ENCODE measurements at regions of chr6 and their contacts with region 1.

Region 1: GRCh38 chr6:7615611-7616383 is 25.8 kb downstream of the SNRNP48 start:
- DNase-seq: peak; percentile 72
- ATAC-seq: peak; percentile 64
- H3K4me3 ChIP-seq: peak overlapping the region in 1 of 3 experiments; percentile 10; a peak in 1 of 6 replicates
- H3K27ac ChIP-seq: no peak overlapping the region
- H3K4me1 ChIP-seq: peaks cover 21% of the 10 kb centered on the region
- H3K27me3 ChIP-seq: peaks cover 0 to 22% of the 10 kb centered on the region in 2 experiments; a peak in 3 of 5 replicates
- CTCF ChIP-seq: peak; percentile 88
- EP300 ChIP-seq: no peak
- POLR2A ChIP-seq: no peak
- RAD21 ChIP-seq: peak; percentile 83

Region 2: GRCh38 chr6:6724539-6725467 is 891.0 kb before region 1 on chr6:
- CTCF ChIA-PET with region 1: no interaction called
- POLR2A ChIA-PET with region 1: no interaction called
- in situ Hi-C with region 1: no loop called
- intact Hi-C with region 1: loop called (anchors 1 kb)
- DNase-seq: peak; percentile 51
- ATAC-seq: peak; percentile 90
- H3K4me3 ChIP-seq: peak overlapping the region; percentile 26 to 75 (median 31)
- H3K27ac ChIP-seq: no peak overlapping the region
- H3K4me1 ChIP-seq: peaks cover 31% of the 10 kb centered on the region
- H3K27me3 ChIP-seq: peaks cover 0 to 4% of the 10 kb centered on the region in 2 experiments; a peak in 2 of 5 replicates
- CTCF ChIP-seq: peak; percentile 90
- EP300 ChIP-seq: no peak
- POLR2A ChIP-seq: no peak
- RAD21 ChIP-seq: peak; percentile 74

Region 3: DNA sequence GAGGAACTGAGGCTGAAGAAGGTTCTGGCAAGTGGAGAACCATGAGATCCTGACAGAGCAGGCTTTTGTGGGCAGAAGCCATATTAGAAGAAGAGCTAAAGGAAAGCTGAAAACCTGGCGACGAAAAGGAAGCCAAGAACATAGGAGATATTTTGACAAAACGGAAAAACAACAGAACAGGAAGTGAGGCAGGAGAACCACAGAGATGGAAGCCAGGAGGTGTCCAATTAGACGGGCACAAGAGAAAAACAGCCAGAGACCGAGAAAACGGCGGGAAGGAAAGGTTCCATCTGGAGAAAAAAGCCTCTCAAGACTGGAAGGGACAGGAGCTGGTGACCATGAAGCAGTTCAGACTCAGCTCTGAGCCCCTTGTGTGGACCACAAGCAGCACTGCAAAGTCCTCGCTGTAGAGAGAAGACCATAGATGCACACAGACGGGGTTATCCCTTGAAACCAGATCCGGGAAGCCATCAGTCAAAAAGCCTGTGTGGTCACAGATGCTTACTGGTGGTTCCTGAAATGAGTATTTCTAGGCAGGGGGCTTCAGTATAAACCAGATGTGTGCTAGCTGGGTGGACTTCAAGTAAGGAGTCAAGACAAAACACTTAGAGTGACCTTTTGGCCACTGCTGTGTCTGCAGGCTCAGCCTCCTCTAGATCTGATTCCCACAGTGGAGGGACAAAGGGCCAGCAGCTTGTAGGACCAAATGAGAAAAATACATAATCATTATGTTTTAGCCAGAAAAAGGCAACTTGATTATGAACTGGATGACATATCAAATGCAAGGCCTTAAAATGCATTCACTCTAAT is 333.5 kb before region 1 on chr6:
- CTCF ChIA-PET with region 1: no interaction called
- POLR2A ChIA-PET with region 1: no interaction called
- in situ Hi-C with region 1: loop called (anchors 10 kb)
- intact Hi-C with region 1: no loop called
- DNase-seq: no peak
- ATAC-seq: peak; percentile 11
- H3K4me3 ChIP-seq: no peak overlapping the region
- H3K27ac ChIP-seq: no peak overlapping the region
- H3K4me1 ChIP-seq: no peaks in the 10 kb centered on the region
- H3K27me3 ChIP-seq: no peaks in the 10 kb centered on the region
- CTCF ChIP-seq: no peak
- EP300 ChIP-seq: no peak
- POLR2A ChIP-seq: no peak
- RAD21 ChIP-seq: no peak

Region 4: DNA sequence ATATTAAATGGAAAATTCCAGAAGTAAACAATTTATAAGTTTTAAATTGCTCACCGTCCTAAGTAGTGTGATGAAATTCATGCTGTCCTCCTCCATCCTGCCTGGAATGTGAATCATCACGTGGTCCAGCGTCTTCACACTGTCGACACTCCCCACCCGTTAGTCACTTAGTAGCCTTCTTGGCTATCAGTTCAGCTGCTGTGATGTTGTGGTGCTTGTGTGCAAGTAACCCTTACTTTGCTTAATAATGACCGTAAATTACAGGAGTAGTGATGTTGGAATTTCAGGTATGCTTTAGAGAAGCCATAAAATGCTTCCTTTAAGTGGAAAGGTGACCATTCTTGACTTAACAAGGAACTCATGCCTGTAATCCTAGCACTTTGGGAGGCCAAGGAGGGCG is 201.0 kb before region 1 on chr6:
- CTCF ChIA-PET with region 1: no interaction called
- POLR2A ChIA-PET with region 1: no interaction called
- in situ Hi-C with region 1: loop called (anchors 5 kb)
- intact Hi-C with region 1: no loop called
- DNase-seq: no peak
- ATAC-seq: no peak
- H3K4me3 ChIP-seq: no peak overlapping the region
- H3K27ac ChIP-seq: no peak overlapping the region
- H3K4me1 ChIP-seq: peaks cover 16% of the 10 kb centered on the region
- H3K27me3 ChIP-seq: no peaks in the 10 kb centered on the region
- CTCF ChIP-seq: no peak
- EP300 ChIP-seq: no peak
- POLR2A ChIP-seq: no peak
- RAD21 ChIP-seq: no peak

Region 5: DNA sequence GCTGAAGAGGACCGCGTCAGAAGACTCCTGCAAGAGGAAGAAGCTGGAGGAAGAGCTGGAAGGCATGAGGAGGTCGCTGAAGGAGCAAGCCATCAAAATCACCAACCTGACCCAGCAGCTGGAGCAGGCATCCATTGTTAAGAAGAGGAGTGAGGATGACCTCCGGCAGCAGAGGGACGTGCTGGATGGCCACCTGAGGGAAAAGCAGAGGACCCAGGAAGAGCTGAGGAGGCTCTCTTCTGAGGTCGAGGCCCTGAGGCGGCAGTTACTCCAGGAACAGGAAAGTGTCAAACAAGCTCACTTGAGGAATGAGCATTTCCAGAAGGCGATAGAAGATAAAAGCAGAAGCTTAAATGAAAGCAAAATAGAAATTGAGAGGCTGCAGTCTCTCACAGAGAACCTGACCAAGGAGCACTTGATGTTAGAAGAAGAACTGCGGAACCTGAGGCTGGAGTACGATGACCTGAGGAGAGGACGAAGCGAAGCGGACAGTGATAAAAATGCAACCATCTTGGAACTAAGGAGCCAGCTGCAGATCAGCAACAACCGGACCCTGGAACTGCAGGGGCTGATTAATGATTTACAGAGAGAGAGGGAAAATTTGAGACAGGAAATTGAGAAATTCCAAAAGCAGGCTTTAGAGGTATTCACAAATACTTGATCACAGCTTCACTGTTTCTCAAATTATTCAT is 34.7 kb before region 1 on chr6:
- CTCF ChIA-PET with region 1: no interaction called
- POLR2A ChIA-PET with region 1: no interaction called
- in situ Hi-C with region 1: no loop called
- intact Hi-C with region 1: no loop called
- DNase-seq: peak; percentile 80
- ATAC-seq: peak; percentile 73
- H3K4me3 ChIP-seq: peak overlapping the region in 1 of 3 experiments; percentile 35; a peak in 2 of 6 replicates
- H3K27ac ChIP-seq: peak overlapping the region; percentile 63
- H3K4me1 ChIP-seq: peaks cover 34% of the 10 kb centered on the region
- H3K27me3 ChIP-seq: no peaks in the 10 kb centered on the region
- CTCF ChIP-seq: no peak
- EP300 ChIP-seq: peak in 1 of 2 experiments; percentile 43; a peak in 1 of 4 replicates
- POLR2A ChIP-seq: peak in 1 of 2 experiments; percentile 41; a peak in 1 of 4 replicates
- RAD21 ChIP-seq: no peak

Region 6: DNA sequence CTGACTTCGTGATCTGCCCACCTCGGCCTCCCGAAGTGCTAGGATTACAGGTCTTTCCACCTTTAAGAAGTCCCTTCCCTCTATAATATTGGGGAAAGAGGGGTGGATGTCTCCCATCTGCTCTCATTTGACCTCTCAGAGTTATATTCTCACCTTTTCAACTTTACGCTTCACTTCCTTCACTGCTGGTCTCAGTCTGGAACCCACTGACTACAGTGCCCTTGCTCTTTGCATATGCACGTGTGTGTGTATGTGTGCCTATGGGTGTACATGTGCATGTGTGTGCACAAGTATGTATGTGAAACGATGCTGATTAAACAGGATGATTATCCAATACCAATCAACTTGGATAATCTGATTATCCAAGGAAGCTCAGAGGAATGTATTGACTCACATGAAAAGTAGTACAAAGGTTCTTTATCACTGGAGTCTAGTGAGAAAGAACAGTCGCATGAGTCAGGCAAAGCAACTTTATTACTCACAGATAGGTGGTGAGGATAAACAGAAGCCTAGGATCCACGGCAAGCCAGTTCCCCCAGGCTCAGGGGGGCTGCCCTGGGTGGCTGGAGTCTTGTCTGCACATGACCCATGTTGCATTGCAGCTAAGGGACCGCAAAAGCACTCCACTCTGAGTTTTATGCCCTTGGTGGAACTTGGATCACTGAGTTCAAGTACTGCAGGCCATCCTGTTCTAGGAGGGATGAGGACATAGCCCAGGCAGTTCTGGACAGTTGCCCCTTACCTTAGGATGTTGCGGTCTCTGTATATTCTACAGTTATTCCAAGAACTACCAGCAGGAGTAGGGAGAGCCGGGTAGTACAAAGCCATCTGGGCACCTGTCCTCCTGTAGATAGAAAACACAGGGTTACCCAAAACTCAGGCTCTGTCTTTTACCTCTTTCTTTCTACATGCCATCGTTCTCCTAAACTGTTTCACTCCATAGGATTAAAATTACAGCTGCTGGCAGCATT is 25.1 kb after region 1 on chr6:
- CTCF ChIA-PET with region 1: no interaction called
- POLR2A ChIA-PET with region 1: no interaction called
- in situ Hi-C with region 1: no loop called
- intact Hi-C with region 1: no loop called
- DNase-seq: peak; percentile 64
- ATAC-seq: peak; percentile 79
- H3K4me3 ChIP-seq: no peak overlapping the region
- H3K27ac ChIP-seq: no peak overlapping the region
- H3K4me1 ChIP-seq: peaks cover 14% of the 10 kb centered on the region; the same call in 1 of the 2 replicates
- H3K27me3 ChIP-seq: peaks cover 0 to 6% of the 10 kb centered on the region in 2 experiments; a peak in 1 of 5 replicates
- CTCF ChIP-seq: no peak
- EP300 ChIP-seq: no peak
- POLR2A ChIP-seq: no peak
- RAD21 ChIP-seq: no peak

Region 7: GRCh38 chr6:8063761-8064637 is 448.2 kb after region 1 on chr6 and contains the start of gene BLOC1S5:
- CTCF ChIA-PET with region 1: no interaction called
- POLR2A ChIA-PET with region 1: no interaction called
- in situ Hi-C with region 1: no loop called
- intact Hi-C with region 1: no loop called
- DNase-seq: peak; percentile 99
- ATAC-seq: peak; percentile 95
- H3K4me3 ChIP-seq: peak within 1 kb of the TSS; percentile 74 to 93 (median 92)
- H3K27ac ChIP-seq: peak within 1 kb of the TSS; percentile 85
- H3K4me1 ChIP-seq: peaks cover 39% of the 10 kb centered on the region
- H3K27me3 ChIP-seq: no peaks in the 10 kb centered on the region; a peak in 1 of 5 replicates
- CTCF ChIP-seq: peak; percentile 60
- EP300 ChIP-seq: peak; percentile 23 to 56; a peak in 2 of 4 replicates
- POLR2A ChIP-seq: peak; percentile 87 to 95
- RAD21 ChIP-seq: peak; percentile 56; the same call in 1 of the 2 replicates
- total RNA-seq, gene BLOC1S5: 41.5 and 63.5 TPM in 2 replicates